Endothelial cell of umbilical vein (primary cell): ENCODE measurements at regions of chr4 and their contacts with region 1.

Region 1: GRCh38 chr4:69773484-69773883 is 13.1 kb upstream of the SULT1B1 start:
- DNase-seq: peak; percentile 97
- H3K4me3 ChIP-seq: no peak overlapping the region
- H3K27ac ChIP-seq: peak overlapping the region; percentile 95
- H3K4me1 ChIP-seq: peaks cover 22% of the 10 kb centered on the region
- H3K27me3 ChIP-seq: no peaks in the 10 kb centered on the region
- CTCF ChIP-seq: no peak
- POLR2A ChIP-seq: no peak

Region 2: GRCh38 chr4:69517674-69518073 is 255.8 kb before region 1 on chr4:
- CTCF ChIA-PET with region 1: no interaction called
- POLR2A ChIA-PET with region 1: no interaction called
- dilution Hi-C with region 1: no loop called
- intact Hi-C with region 1: no loop called
- DNase-seq: no peak
- H3K4me3 ChIP-seq: no peak overlapping the region
- H3K27ac ChIP-seq: no peak overlapping the region
- H3K4me1 ChIP-seq: no peaks in the 10 kb centered on the region
- H3K27me3 ChIP-seq: no peaks in the 10 kb centered on the region
- CTCF ChIP-seq: no peak
- POLR2A ChIP-seq: no peak

Region 3: GRCh38 chr4:69707807-69708206 is 65.7 kb before region 1 on chr4:
- CTCF ChIA-PET with region 1: no interaction called
- POLR2A ChIA-PET with region 1: no interaction called
- dilution Hi-C with region 1: no loop called
- intact Hi-C with region 1: loop called (anchors 1 kb)
- DNase-seq: no peak
- H3K4me3 ChIP-seq: no peak overlapping the region
- H3K27ac ChIP-seq: peak overlapping the region; percentile 79
- H3K4me1 ChIP-seq: peaks cover 17% of the 10 kb centered on the region
- H3K27me3 ChIP-seq: no peaks in the 10 kb centered on the region
- CTCF ChIP-seq: no peak
- POLR2A ChIP-seq: no peak

Region 4: DNA sequence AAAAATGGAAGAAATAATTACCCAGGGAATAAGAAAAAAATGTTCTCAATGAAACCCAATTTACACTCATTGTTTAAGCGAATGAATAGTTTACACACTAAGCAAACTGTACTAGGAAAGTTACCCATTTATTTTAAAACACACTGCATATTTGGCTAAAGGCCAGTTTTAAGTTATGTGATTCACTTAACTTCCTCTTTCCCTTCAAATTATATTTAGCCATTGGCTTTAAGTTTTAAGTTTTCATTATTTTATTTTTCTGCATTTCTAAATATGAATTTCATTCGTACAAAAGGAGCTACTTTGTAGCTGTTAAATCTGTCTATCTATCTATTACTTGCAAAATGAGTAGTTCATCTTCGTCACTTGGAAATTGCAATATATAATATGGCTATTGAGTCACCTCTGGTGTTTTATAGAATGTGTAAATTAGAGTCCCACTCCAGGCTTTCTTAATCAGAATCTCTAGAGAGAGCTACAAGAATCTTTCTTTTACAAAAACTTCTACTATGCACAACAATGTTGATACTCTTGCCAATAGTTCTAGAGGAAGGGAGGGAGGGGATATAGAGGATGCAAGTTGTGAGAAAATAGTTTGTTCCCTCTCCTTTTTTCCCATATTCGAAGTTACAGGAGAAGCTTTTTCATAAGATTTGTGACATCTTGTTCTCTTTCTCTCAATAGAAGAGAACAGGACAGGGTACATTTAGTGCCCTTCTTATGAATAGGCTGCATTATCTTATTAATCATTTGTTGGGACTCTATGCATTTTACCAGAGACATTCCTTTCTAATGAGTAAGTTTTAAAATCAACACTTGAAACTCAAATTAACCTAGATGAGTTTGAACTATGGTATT is 54.9 kb before region 1 on chr4:
- CTCF ChIA-PET with region 1: interaction called, 3 read pairs
- POLR2A ChIA-PET with region 1: no interaction called
- dilution Hi-C with region 1: no loop called
- intact Hi-C with region 1: loop called (anchors 1 kb)
- DNase-seq: peak; percentile 83
- H3K4me3 ChIP-seq: no peak overlapping the region
- H3K27ac ChIP-seq: peak overlapping the region; percentile 80
- H3K4me1 ChIP-seq: peaks cover 56% of the 10 kb centered on the region
- H3K27me3 ChIP-seq: no peaks in the 10 kb centered on the region
- CTCF ChIP-seq: no peak
- POLR2A ChIP-seq: peak; percentile 4

Region 5: DNA sequence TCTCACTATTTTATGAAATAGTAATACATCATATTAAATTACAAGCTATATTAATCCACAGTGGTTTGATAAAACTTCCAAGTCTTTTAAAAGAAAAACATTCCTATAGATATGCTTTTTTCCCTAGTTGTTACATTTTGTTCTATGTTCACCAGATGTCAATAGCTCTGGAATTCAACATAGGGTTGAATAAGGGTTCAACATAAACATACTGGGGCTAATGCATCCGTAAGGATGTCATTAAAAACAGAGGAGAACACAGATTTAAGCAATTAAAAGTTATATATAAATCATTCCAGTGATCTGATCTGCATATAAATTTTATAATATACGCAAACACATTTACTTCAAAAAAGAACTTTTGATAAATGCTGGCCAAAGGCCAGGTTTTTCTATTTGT is 45.6 kb before region 1 on chr4:
- CTCF ChIA-PET with region 1: interaction called, 3 read pairs
- POLR2A ChIA-PET with region 1: no interaction called
- dilution Hi-C with region 1: no loop called
- intact Hi-C with region 1: loop called (anchors 1 kb)
- DNase-seq: no peak
- H3K4me3 ChIP-seq: no peak overlapping the region
- H3K27ac ChIP-seq: peak overlapping the region; percentile 94
- H3K4me1 ChIP-seq: peaks cover 60% of the 10 kb centered on the region
- H3K27me3 ChIP-seq: no peaks in the 10 kb centered on the region
- CTCF ChIP-seq: no peak
- POLR2A ChIP-seq: no peak

Region 6: DNA sequence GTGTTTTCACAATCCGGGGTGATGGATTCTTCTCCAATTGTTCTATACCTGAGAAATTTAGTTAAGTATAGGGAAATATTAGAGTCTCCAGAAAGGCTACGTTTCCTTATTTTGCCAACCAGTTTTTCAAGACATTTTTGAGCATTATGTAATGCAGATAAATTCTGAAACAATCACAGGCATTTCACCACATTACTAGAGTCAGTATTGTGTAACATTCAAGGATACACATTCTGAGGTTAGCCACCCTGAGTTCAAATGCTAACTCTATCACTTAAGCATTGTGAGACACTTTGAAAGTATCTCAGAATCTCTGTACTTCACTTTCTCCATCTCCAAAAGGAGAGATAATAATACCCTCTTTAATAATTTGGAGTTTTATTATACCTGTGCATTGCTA is 23.7 kb before region 1 on chr4:
- CTCF ChIA-PET with region 1: interaction called, 3 read pairs
- POLR2A ChIA-PET with region 1: no interaction called
- dilution Hi-C with region 1: no loop called
- intact Hi-C with region 1: loop called (anchors 1 kb)
- DNase-seq: no peak
- H3K4me3 ChIP-seq: no peak overlapping the region
- H3K27ac ChIP-seq: no peak overlapping the region
- H3K4me1 ChIP-seq: peaks cover 21% of the 10 kb centered on the region
- H3K27me3 ChIP-seq: no peaks in the 10 kb centered on the region
- CTCF ChIP-seq: no peak
- POLR2A ChIP-seq: no peak